GM23248 (cell line): ENCODE measurements at regions of chr4 and their contacts with region 1.

Region 1: GRCh38 chr4:20251796-20252655 is at the start of gene SLIT2:
- DNase-seq: peak; percentile 88
- H3K4me3 ChIP-seq: peak within 1 kb of the TSS; percentile 82
- H3K27ac ChIP-seq: peak within 1 kb of the TSS; percentile 44
- H3K4me1 ChIP-seq: peaks cover 34% of the 10 kb centered on the region
- H3K27me3 ChIP-seq: no peaks in the 10 kb centered on the region
- total RNA-seq, gene SLIT2: 23.0 and 24.9 TPM in 2 replicates

Region 2: DNA sequence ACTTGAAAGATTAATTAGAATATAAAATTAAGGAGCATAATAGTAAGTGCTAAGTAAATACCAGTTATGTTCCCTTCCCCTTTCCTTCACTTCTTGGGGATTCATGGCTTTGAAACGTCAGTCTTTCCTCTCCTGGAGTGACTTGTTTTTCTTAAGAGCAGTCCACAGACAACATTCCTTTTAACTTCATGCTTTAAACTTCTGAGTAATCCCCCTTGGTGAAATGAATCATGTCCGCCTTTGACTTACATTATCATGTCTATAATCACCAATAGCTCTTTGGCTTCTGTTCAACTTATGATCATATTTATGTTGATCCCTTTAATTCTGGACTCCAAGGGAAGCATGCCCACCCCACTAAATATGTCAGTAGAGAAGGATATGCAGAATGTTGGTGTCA is 1012.5 kb before region 1 on chr4:
- in situ Hi-C with region 1: loop called (anchors 10 kb)
- DNase-seq: peak; percentile 41
- H3K4me3 ChIP-seq: no peak overlapping the region
- H3K27ac ChIP-seq: no peak overlapping the region
- H3K4me1 ChIP-seq: no peaks in the 10 kb centered on the region
- H3K27me3 ChIP-seq: no peaks in the 10 kb centered on the region

Region 3: DNA sequence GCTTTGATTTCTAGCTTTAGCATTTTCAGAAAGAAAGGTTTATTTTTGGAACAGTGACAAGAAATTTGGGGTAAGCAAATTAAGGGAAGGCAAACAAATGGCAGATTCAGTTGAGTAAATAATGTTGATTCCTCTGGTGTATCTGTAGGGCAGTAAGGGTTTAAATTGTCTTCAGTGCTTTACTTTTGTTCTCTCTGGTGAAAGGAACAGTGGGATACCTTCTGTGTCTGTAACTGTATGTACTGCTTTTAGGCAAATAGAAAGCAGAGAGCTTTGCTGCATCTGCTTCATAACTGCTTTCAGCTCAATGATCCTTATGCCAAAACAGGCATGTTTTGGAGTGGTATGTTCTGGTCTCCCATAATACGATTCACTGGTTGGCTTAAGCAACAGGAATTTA is 932.4 kb before region 1 on chr4:
- in situ Hi-C with region 1: loop called (anchors 10 kb)
- DNase-seq: no peak
- H3K4me3 ChIP-seq: no peak overlapping the region
- H3K27ac ChIP-seq: no peak overlapping the region
- H3K4me1 ChIP-seq: no peaks in the 10 kb centered on the region
- H3K27me3 ChIP-seq: no peaks in the 10 kb centered on the region